GM10248 (cell line): ENCODE measurements at regions of chr1 and their contacts with region 1.

Region 1: GRCh38 chr1:162357681-162358266 is 18.9 kb downstream of the SPATA46 start:
- DNase-seq: peak; percentile 52
- CTCF ChIP-seq: peak; percentile 53

Region 2: DNA sequence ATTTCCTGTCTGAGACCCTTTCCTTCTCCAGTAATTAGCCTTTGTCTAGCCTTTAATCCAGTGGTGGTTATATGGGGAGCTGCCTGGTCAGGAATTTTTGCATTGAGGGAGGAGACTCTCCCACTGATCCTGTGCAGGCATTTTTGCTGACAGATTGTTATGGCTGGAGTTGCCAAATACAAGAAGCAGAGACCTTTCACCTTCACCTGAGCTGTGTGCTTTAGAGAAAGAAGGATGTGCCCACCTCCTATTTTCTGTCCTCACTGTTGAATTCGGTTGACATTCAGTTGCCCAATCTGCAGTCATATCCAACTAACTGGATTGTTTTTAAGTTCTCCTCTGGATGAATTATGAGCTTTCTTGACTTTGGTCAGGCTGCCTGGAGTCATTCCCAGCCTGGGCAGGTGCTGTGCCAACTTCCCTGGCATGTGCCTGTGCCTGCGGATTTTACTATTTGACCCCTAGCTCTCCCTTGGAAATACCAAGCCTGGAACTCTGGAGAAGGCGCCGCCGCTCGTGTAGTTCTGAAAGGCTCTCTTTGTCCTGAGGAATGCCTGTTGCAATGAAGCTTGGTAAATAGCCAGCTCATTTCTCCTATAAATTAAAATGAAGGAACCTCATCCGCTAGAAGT is 144.4 kb before region 1 on chr1:
- CTCF ChIA-PET with region 1: no interaction called
- POLR2A ChIA-PET with region 1: no interaction called
- DNase-seq: no peak
- CTCF ChIP-seq: no peak

Region 3: DNA sequence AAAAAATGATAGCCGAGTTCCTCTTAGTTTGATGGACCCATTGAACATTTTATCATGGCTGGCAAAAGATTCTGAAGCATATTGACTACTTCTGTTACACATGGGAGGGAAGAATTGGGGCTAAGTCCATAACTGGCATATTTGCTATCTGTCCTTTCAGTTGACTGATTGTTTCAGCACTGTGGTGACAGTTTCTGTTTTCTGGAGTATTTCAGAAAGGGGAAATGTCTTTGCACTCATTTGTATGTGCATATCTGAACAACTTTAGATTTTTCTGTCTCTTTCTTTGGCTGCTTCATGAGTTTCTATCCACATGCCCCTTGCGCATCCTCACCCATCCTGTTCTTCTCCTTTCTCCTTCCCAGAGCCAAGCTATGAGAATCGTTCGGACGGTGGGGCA is 14.3 kb before region 1 on chr1:
- CTCF ChIA-PET with region 1: interaction called, 25 read pairs
- POLR2A ChIA-PET with region 1: no interaction called
- DNase-seq: no peak
- CTCF ChIP-seq: no peak

Region 4: DNA sequence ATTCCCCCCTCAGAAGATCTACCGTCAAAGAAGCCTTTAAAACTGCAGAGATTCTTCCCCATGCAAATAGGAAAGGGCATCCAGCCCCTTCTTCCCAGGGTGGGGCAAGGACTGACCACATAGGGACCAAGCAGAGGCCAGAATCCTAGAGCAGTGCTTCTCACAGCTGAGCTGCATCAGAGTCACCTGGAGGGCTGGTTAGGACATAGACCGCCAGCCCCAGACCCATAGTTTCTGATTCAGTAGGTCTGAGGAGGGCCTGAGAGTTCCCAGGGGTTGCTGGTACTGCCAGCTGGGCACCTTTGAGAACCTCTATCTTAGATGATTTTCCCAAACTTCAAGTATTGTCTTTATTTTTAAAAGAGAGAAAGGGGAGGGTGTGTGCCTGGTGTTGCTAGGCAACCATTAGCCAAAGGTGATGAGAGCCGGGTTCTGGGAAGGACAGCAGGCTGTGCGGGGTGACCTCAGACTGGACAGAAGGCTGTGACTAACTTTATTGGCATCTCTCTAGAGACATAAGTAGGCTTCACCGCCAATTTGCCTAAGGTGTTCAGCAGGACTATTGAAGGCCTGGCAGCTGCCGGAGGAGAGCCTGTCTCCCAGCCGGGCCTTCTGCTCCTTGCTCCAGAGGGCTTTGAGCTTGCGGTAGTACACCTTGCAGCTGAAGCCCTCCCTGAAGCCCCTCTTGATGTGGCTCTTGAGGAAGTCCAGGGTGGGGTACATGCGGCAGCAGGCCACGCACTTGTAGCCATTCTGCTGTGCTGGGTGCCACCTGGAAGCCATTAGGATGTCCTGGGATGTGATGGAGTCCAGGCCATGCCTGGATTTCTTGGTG is 16.0 kb after region 1 on chr1:
- CTCF ChIA-PET with region 1: interaction called, 11 read pairs
- POLR2A ChIA-PET with region 1: no interaction called
- DNase-seq: no peak
- CTCF ChIP-seq: no peak

Region 5: DNA sequence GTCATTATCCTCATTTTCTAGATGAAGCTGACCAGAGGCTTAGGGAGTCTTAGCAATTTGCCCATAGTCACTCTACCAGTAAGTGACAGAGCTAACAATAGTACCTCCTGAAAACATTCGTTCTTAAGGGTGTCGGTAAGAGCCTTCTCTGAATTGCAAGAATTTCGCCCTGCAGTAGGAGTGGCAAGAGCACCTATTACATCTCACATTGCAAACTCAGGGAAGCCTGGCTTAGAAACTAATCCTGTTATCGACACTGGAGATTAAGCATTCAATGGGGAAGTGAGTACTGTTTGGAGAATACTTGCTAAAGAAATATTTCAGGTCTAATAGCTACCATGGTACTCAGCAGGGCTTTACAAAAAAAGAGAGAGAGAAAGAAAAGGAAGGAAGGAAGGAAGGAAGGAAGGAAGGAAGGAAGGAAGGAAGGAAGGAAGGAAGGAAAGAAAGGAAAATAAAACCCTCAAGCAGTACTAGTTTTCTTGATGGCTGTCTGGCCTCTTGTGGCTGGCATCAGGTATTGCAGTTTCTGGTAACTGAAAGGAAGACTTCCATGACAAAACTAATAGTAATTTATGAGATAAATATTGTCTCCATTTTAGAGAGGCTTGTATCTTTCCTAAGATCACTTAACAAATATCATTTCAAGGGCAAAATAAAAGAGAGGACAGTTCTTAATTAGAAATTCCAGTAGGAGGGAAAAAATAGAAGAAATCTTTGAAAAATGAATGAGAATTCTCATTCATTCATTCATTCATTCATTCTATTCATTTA is 34.2 kb after region 1 on chr1:
- CTCF ChIA-PET with region 1: interaction called, 28 read pairs
- POLR2A ChIA-PET with region 1: no interaction called
- DNase-seq: peak; percentile 51
- CTCF ChIP-seq: peak; percentile 80

Region 6: GRCh38 chr1:162627662-162628296 is 270.0 kb after region 1 on chr1:
- CTCF ChIA-PET with region 1: no interaction called
- POLR2A ChIA-PET with region 1: no interaction called
- DNase-seq: no peak
- CTCF ChIP-seq: peak; percentile 35

Region 7: GRCh38 chr1:162678439-162678838 is 320.7 kb after region 1 on chr1:
- CTCF ChIA-PET with region 1: no interaction called
- POLR2A ChIA-PET with region 1: no interaction called
- DNase-seq: no peak
- CTCF ChIP-seq: no peak